ENCODE measurements at regions of chr1 and their contacts with region 1.

Region 1: GRCh38 chr1:2212542-2213491 is 15.3 kb upstream of the SKI start:
- DNase-seq: peak; percentile 93 to 97 (median 96)
- ATAC-seq: peak; percentile 53 to 74 (median 72)
- H3K4me3 ChIP-seq: peak overlapping the region in 10 of 12 donors; percentile 26 to 56 (median 44)
- H3K27ac ChIP-seq: peak overlapping the region; percentile 92 to 100 (median 98)
- H3K4me1 ChIP-seq: peaks cover 16 to 62% (median 51%) of the 10 kb centered on the region in 12 donors
- H3K27me3 ChIP-seq: no peaks in the 10 kb centered on the region
- CTCF ChIP-seq: peak in 9 of 12 donors; percentile 20 to 55 (median 33)
- POLR2A ChIP-seq: peak in 1 of 2 donors; percentile 49

Region 2: GRCh38 chr1:2227346-2228153 is 14.7 kb after region 1 on chr1:
- intact Hi-C with region 1: loop called in 3 of 10 experiments (anchors 1 to 2 kb)
- DNase-seq: peak; percentile 96 to 99 (median 97)
- ATAC-seq: peak; percentile 83 to 93 (median 86)
- H3K4me3 ChIP-seq: peak overlapping the region; percentile 58 to 96 (median 85)
- H3K27ac ChIP-seq: peak overlapping the region; percentile 98 to 100 (median 100)
- H3K4me1 ChIP-seq: peaks cover 0 to 52% (median 31%) of the 10 kb centered on the region in 12 donors
- H3K27me3 ChIP-seq: no peaks in the 10 kb centered on the region
- CTCF ChIP-seq: peak in 1 of 12 donors; percentile 14
- POLR2A ChIP-seq: peak; percentile 19 to 86